ENCODE measurements at regions of chr4 and their contacts with region 1.

Region 1: DNA sequence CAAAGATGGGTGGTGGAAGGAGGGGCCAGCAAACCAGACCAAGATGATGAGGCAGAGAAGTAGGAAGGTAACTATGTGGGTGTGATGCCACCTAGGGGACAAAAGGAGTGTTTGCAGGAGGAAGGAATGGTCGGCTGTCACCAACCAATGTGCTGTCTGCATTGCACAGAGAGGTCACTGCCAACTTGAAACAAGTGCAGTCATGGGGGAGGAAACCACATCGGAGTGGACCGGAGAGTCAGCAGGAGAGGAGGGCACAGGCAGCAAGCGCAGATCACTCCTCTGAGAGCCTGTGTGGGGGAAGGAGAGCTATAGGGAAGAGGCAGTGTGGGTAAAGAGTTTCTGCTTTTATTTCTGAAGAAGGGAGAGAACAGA is 38.5 kb upstream of the FGFBP2 start:
- DNase-seq: peak in 2 of 3 donors; percentile 42 to 60
- ATAC-seq: peak; percentile 98
- H3K4me3 ChIP-seq: no peak overlapping the region
- H3K4me1 ChIP-seq: no peaks in the 10 kb centered on the region
- CTCF ChIP-seq: peak; percentile 66

Region 2: DNA sequence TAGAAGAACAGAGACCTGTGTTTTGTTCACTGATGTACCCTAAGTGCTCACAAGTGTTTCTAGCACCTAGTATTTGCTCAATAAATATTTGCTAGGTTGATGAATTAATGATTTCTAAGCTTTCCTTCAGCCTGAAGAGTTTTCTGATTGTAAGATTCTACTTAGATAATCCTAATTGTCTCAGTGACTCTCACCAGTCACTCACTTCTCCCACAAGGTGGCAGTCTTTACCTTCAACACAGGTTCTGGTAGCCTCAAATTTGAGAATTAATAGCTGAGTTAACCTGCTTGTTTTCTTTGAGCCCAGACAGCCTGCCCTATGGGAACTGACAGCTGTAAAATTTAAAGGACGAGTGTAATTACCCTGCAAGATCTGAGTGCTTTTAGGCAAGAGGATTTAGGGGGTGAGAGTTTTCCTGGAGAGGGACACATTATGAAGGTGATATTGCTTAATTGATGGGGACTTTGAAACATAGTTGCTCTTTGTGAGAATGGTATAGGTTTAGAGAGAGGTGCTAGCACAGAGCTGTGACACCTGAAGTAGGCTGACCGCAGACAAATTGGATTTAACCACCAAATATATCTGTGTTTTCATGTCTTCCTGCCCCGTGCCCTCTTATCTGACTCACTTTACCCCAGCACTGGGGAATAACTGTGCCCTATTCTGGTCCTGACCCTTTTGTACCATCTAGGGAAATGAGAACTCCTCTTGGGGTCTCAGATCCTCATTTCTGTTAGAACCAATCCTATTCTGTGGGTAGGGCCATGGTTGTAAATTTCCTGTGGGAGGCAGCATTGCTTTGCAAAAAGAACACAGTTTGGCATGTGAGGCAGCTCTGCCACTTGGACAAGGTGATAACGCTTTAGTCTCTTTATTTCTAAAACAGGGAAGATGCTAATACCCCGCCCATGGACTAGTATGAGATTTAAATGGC is 195.6 kb before region 1 on chr4:
- intact Hi-C with region 1: loop called in 1 of 2 experiments (anchors 10 kb)
- DNase-seq: peak in 1 of 3 donors; percentile 71
- ATAC-seq: peak; percentile 80
- H3K4me3 ChIP-seq: no peak overlapping the region
- H3K4me1 ChIP-seq: no peaks in the 10 kb centered on the region
- CTCF ChIP-seq: peak; percentile 53

Region 3: GRCh38 chr4:15882675-15883086 is 118.8 kb before region 1 on chr4:
- intact Hi-C with region 1: loop called (anchors 5 to 10 kb)
- DNase-seq: peak in 2 of 3 donors; percentile 44 to 52
- ATAC-seq: peak; percentile 93
- H3K4me3 ChIP-seq: no peak overlapping the region
- H3K4me1 ChIP-seq: peaks cover 11% of the 10 kb centered on the region
- CTCF ChIP-seq: peak; percentile 79

Region 4: GRCh38 chr4:16555156-16555555 is 553.7 kb after region 1 on chr4:
- intact Hi-C with region 1: no loop called
- DNase-seq: no peak
- ATAC-seq: no peak
- H3K4me3 ChIP-seq: no peak overlapping the region
- H3K4me1 ChIP-seq: no peaks in the 10 kb centered on the region
- CTCF ChIP-seq: no peak